ENCODE measurements at regions of chr11 and their contacts with region 1.

Region 1: DNA sequence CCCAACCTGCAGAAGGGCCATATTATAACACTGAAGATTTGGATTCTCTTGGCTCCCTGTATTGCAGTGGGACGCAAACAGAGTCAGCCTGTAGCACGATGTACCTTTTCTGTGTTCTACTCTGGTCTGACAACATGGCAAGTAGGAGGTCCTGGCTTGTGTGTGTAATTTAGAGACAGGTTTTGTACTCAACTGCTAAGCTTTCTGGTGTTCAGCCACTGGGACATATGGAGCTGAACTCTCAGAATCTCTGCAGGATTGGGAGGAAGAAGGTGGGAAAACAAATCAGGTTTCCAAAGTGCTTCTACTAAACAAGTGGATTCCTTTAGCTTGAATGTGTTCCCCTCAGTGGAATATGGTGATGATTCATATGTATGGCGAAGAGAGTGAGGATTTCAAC is 192.5 kb upstream of the MTMR2 start:
- DNase-seq: no peak
- H3K4me3 ChIP-seq: no peak overlapping the region
- H3K27ac ChIP-seq: peak overlapping the region in 1 of 2 donors; percentile 82
- H3K4me1 ChIP-seq: peaks cover 0 to 4% of the 10 kb centered on the region in 2 donors
- H3K27me3 ChIP-seq: no peaks in the 10 kb centered on the region
- CTCF ChIP-seq: no peak
- POLR2A ChIP-seq: no peak

Region 2: GRCh38 chr11:96102664-96103078 is 13.7 kb before region 1 on chr11:
- intact Hi-C with region 1: loop called (anchors 2 kb)
- DNase-seq: no peak
- H3K4me3 ChIP-seq: no peak overlapping the region
- H3K27ac ChIP-seq: peak overlapping the region; percentile 70 to 95
- H3K4me1 ChIP-seq: peaks cover 19 to 24% of the 10 kb centered on the region in 2 donors
- H3K27me3 ChIP-seq: no peaks in the 10 kb centered on the region
- CTCF ChIP-seq: no peak
- POLR2A ChIP-seq: no peak

Region 3: DNA sequence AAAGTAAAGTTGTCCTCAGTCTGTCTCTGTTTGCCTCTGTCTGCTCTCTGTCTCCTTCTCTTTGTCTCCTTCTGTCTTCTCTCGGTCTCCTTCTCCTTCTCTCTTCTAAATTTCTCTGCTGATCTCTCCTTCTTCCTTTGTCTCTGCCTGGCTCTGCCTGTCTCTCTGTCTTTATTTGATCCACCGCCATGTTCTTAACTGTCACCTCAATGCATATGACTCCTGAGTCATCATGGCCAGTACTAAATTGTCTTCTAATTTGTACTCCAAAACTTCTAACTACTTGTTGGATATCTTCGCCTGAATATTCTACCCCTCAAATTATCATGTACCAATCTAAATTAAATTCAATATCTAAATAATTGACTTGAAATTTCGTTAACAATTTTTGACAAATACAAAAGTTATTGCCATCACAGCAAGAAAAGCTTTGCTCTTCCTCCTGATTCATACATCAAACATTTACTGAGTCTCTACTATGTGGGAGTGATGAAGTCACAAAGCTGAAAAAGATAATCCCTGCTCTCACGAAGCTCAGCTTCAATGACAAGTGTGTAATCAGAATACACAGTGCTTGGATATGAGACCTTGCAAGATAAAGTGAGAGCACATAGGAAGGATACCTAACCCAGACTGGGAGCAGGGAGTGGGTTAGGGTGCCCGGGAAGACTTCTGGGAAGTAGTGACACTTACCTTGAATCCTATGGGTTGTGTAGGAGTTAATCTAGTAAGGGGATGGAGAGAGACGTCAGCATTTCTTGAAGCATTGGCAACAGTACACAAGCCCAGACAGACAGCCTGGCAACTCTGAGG is 33.6 kb after region 1 on chr11:
- intact Hi-C with region 1: no loop called
- DNase-seq: no peak
- H3K4me3 ChIP-seq: no peak overlapping the region
- H3K27ac ChIP-seq: peak overlapping the region; percentile 51 to 80
- H3K4me1 ChIP-seq: peaks cover 0 to 15% of the 10 kb centered on the region in 2 donors
- H3K27me3 ChIP-seq: no peaks in the 10 kb centered on the region
- CTCF ChIP-seq: no peak
- POLR2A ChIP-seq: no peak

Region 4: GRCh38 chr11:96400697-96401096 is 284.3 kb after region 1 on chr11:
- intact Hi-C with region 1: no loop called
- DNase-seq: no peak
- H3K4me3 ChIP-seq: no peak overlapping the region
- H3K27ac ChIP-seq: no peak overlapping the region
- H3K4me1 ChIP-seq: no peaks in the 10 kb centered on the region
- H3K27me3 ChIP-seq: no peaks in the 10 kb centered on the region
- CTCF ChIP-seq: no peak
- POLR2A ChIP-seq: no peak